Dorsolateral prefrontal cortex (tissue), 120 donors: ENCODE measurements at regions of chr19 and their contacts with region 1.

Region 1: GRCh38 chr19:34926685-34927375 is at the start of gene ZNF30:
- DNase-seq: peak; percentile 85 to 94 (median 92)
- H3K4me3 ChIP-seq: peak within 1 kb of the TSS; percentile 55 to 94 (median 78)
- H3K27ac ChIP-seq: peak within 1 kb of the TSS in 54 of 59 donors; percentile 43 to 90 (median 74)
- H3K27me3 ChIP-seq: no peaks in the 10 kb centered on the region
- CTCF ChIP-seq: peak in 43 of 56 donors; percentile 2 to 57 (median 30)
- total RNA-seq, gene ZNF30: 4.8 to 17.3 (median 8.4) TPM

Region 2: GRCh38 chr19:34904846-34905527 is 21.8 kb before region 1 on chr19:
- intact Hi-C with region 1: no loop called
- DNase-seq: no peak
- H3K4me3 ChIP-seq: no peak overlapping the region
- H3K27ac ChIP-seq: no peak overlapping the region
- H3K27me3 ChIP-seq: peaks cover 0 to 52% (median 35%) of the 10 kb centered on the region in 45 donors
- CTCF ChIP-seq: no peak

Region 3: DNA sequence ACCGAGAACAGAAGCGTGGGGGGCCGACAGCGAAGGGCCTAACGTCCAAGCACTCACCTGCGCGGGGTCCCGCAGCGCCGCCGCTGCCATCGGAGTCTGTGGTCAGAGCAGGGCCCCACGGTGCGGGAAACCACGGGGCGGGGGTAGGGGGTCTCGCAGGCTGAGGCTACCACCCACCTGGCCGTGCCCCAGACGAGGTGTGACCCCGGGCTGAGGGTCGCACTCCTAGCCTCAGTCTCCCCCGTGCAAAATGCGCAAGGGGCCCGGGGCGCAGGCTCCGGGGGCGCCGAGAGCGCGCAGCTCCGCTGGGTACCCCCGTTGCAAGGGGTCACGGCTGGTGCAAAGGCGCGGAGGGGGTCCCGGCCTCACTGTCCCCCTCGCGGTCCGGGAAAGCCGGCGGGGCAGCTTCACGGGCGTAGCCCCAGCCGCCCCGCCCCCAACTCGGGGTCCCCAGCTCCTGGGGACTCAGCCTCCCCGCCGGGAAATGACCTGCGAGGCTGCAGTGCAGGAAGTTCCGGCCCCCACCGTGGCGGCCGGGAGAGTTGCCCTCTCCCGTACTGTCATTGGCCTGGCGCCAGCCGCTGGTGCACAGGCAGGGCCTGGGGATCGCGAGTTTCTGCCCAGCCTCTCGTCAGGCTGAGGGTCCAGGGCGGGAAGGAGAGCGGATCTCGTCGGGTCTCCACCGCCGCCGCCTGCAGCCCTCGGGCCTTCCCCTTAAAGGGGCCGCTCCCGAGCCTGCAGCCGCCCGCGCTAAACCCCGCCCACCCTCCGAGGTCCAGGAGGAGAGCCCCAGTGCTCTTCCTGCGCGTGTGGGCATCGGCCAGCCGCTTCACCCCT is 37.0 kb after region 1 on chr19 and contains the start of gene ZNF792:
- intact Hi-C with region 1: loop called in 1 of 2 experiments (anchors 5 kb)
- DNase-seq: peak in 8 of 10 donors; percentile 27 to 72 (median 47)
- H3K4me3 ChIP-seq: peak within 1 kb of the TSS; percentile 65 to 99 (median 89)
- H3K27ac ChIP-seq: peak within 1 kb of the TSS in 34 of 59 donors; percentile 0 to 87 (median 44)
- H3K27me3 ChIP-seq: no peaks in the 10 kb centered on the region
- CTCF ChIP-seq: no peak
- total RNA-seq, gene ZNF792: 2.3 to 7.1 (median 4.5) TPM